Naive thymus-derived CD4-positive, alpha-beta T cell (primary cell): ENCODE measurements at regions of chr2 and their contacts with region 1.

Region 1: DNA sequence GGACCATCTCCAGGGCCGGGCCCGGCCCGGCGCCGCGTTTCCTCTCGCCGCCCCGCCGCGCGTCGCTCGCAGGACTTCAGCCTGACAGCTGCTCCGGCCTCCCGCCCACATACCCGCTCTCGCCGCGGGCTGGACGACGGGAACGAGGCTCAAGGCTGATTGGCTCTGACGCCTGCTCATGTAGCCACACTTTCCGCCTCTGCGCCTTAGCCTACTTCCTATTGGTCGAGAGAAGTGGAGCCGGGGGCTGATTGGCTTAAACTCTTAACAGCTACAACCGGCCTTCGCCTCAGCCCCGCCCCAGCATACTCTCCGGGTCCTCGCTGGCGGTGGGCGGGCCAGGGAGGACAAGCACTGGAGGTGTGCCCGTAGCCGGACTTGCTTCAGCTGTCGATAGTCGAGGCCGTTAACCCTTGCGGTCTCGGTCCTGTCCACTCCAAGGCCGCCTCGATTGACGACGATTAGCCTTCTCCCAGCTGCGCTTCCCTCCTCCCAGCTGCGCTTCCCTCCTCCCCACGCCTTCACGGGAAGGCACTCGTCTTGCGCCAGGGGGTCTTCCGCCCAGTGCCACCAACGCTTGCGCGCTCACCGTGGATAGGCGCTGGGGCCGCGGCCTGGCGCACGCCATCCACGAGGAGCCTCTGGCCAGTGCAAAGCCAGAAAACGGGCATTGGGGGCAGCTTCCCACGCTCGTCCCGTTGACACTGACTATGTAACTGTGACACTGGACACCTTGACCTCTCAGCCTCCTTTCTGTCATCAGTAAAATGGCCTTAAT is at the start of gene PRADC1:
- DNase-seq: peak; percentile 73 to 95 (median 91)
- ATAC-seq: peak; percentile 89
- H3K4me3 ChIP-seq: peak within 1 kb of the TSS; percentile 90
- H3K4me3 Mint-ChIP-seq: peak within 1 kb of the TSS; percentile 88 to 100 (median 98)
- H3K27ac ChIP-seq: peak within 1 kb of the TSS; percentile 94
- H3K27ac Mint-ChIP-seq: peak within 1 kb of the TSS; percentile 77 to 96 (median 94)
- H3K4me1 ChIP-seq: peaks cover 15% of the 10 kb centered on the region in 2 donors
- H3K4me1 Mint-ChIP-seq: peaks cover 25 to 41% (median 37%) of the 10 kb centered on the region in 7 donors
- H3K27me3 ChIP-seq: no peaks in the 10 kb centered on the region
- H3K27me3 Mint-ChIP-seq: peaks cover 0 to 2% (median 0%) of the 10 kb centered on the region in 5 donors
- total RNA-seq, gene PRADC1: 4.3 to 8.8 (median 6.9) TPM

Region 2: GRCh38 chr2:73071360-73072133 is 161.8 kb before region 1 on chr2 and contains the start of gene SFXN5:
- CTCF ChIA-PET with region 1: no interaction called
- POLR2A ChIA-PET with region 1: interaction called, 5 read pairs
- intact Hi-C with region 1: loop called (anchors 1 kb)
- DNase-seq: peak; percentile 85 to 98 (median 90)
- ATAC-seq: peak; percentile 93
- H3K4me3 ChIP-seq: peak within 1 kb of the TSS; percentile 98
- H3K4me3 Mint-ChIP-seq: peak within 1 kb of the TSS; percentile 82 to 98 (median 93)
- H3K27ac ChIP-seq: peak within 1 kb of the TSS; percentile 81
- H3K27ac Mint-ChIP-seq: peak within 1 kb of the TSS; percentile 86 to 96 (median 94)
- H3K4me1 ChIP-seq: peaks cover 5 to 7% of the 10 kb centered on the region in 2 donors
- H3K4me1 Mint-ChIP-seq: peaks cover 14 to 39% (median 26%) of the 10 kb centered on the region in 7 donors
- H3K27me3 ChIP-seq: no peaks in the 10 kb centered on the region
- H3K27me3 Mint-ChIP-seq: peaks cover 0 to 18% (median 0%) of the 10 kb centered on the region in 5 donors
- total RNA-seq, gene SFXN5: 8.8 to 17.4 (median 10.9) TPM

Region 3: GRCh38 chr2:73253901-73254300 is 20.6 kb after region 1 on chr2:
- CTCF ChIA-PET with region 1: interaction called, 4 read pairs
- POLR2A ChIA-PET with region 1: interaction called, 12 read pairs
- intact Hi-C with region 1: loop called in 1 of 2 experiments (anchors 2 kb)
- DNase-seq: no peak
- ATAC-seq: peak; percentile 25
- H3K4me3 ChIP-seq: no peak overlapping the region
- H3K4me3 Mint-ChIP-seq: no peak overlapping the region
- H3K27ac ChIP-seq: no peak overlapping the region
- H3K27ac Mint-ChIP-seq: peak overlapping the region in 2 of 9 donors; percentile 3 to 25
- H3K4me1 ChIP-seq: peaks cover 0 to 6% of the 10 kb centered on the region in 2 donors
- H3K4me1 Mint-ChIP-seq: peaks cover 0 to 16% (median 8%) of the 10 kb centered on the region in 7 donors
- H3K27me3 ChIP-seq: no peaks in the 10 kb centered on the region
- H3K27me3 Mint-ChIP-seq: no peaks in the 10 kb centered on the region

Region 4: GRCh38 chr2:73736855-73737779 is 503.8 kb after region 1 on chr2 and contains the start of gene TPRKB:
- CTCF ChIA-PET with region 1: no interaction called
- POLR2A ChIA-PET with region 1: interaction called, 8 read pairs
- intact Hi-C with region 1: loop called in 1 of 2 experiments (anchors 1 kb)
- DNase-seq: peak; percentile 73 to 95 (median 94)
- ATAC-seq: peak; percentile 99
- H3K4me3 ChIP-seq: peak within 1 kb of the TSS; percentile 78
- H3K4me3 Mint-ChIP-seq: peak within 1 kb of the TSS; percentile 92 to 98 (median 98)
- H3K27ac ChIP-seq: peak within 1 kb of the TSS; percentile 67
- H3K27ac Mint-ChIP-seq: peak within 1 kb of the TSS; percentile 85 to 97 (median 91)
- H3K4me1 ChIP-seq: peaks cover 8 to 14% of the 10 kb centered on the region in 2 donors
- H3K4me1 Mint-ChIP-seq: peaks cover 10 to 31% (median 21%) of the 10 kb centered on the region in 7 donors
- H3K27me3 ChIP-seq: no peaks in the 10 kb centered on the region
- H3K27me3 Mint-ChIP-seq: peaks cover 0 to 2% (median 0%) of the 10 kb centered on the region in 5 donors
- total RNA-seq, gene TPRKB: 16.5 to 34.6 (median 27.5) TPM

Region 5: GRCh38 chr2:74391580-74392448 is 1158.5 kb after region 1 on chr2:
- CTCF ChIA-PET with region 1: no interaction called
- POLR2A ChIA-PET with region 1: no interaction called
- intact Hi-C with region 1: loop called in 1 of 2 experiments (anchors 10 kb)
- DNase-seq: peak; percentile 89 to 99 (median 93)
- ATAC-seq: peak; percentile 97
- H3K4me3 ChIP-seq: peak overlapping the region; percentile 78
- H3K4me3 Mint-ChIP-seq: peak overlapping the region in 4 of 10 donors; percentile 40 to 100 (median 92)
- H3K27ac ChIP-seq: peak overlapping the region; percentile 91
- H3K27ac Mint-ChIP-seq: peak overlapping the region in 8 of 9 donors; percentile 98 to 100 (median 99)
- H3K4me1 ChIP-seq: peaks cover 8 to 25% of the 10 kb centered on the region in 2 donors
- H3K4me1 Mint-ChIP-seq: peaks cover 0 to 15% (median 5%) of the 10 kb centered on the region in 7 donors
- H3K27me3 ChIP-seq: no peaks in the 10 kb centered on the region
- H3K27me3 Mint-ChIP-seq: peaks cover 0 to 14% (median 5%) of the 10 kb centered on the region in 5 donors

Region 6: DNA sequence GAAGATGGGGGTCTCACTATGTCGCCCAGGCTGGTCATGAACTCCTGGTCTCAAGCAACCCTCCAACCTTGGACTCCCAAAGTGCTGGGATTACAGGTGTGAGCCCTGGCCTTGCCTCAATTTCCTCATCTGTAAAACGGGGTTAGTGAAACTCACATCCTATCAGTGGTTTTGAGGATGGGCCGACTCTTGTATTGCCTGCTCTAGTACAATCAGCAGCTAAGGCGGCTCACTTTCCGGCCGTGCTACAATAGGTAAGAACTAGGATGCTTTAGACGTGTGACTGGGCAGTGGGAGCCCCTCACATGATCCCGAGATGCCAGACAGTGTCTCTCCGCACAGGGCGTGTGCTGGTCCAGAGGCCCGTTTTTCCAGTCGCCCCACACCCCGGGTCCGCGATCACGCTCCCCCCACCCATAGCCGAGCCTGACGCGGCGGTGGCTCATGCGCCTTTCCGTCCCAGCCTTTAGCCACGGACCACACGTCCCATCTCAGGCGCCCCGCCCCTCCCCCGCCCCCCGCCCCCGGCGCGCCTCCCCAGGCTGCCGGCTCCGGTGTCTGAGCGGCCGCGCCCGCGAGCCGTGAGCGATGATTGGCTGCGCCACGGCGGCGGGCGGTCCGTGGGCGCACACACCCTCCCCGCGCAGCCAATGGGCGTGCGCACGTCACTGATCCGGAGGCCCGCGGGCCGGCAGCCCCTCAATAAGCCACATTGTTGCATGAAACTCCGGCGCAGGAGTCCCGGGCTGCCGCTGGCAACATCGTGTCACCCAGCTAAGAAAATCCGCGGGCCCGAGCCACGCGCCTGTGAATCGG is 1600.3 kb after region 1 on chr2 and contains the start of gene HK2:
- CTCF ChIA-PET with region 1: no interaction called
- POLR2A ChIA-PET with region 1: no interaction called
- intact Hi-C with region 1: loop called in 1 of 2 experiments (anchors 10 kb)
- DNase-seq: peak; percentile 68 to 87 (median 78)
- ATAC-seq: peak; percentile 91
- H3K4me3 ChIP-seq: peak within 1 kb of the TSS; percentile 72
- H3K4me3 Mint-ChIP-seq: peak within 1 kb of the TSS; percentile 89 to 97 (median 94)
- H3K27ac ChIP-seq: peak within 1 kb of the TSS; percentile 67
- H3K27ac Mint-ChIP-seq: peak within 1 kb of the TSS; percentile 35 to 95 (median 91)
- H3K4me1 ChIP-seq: peaks cover 14 to 32% of the 10 kb centered on the region in 2 donors
- H3K4me1 Mint-ChIP-seq: peaks cover 28 to 49% (median 33%) of the 10 kb centered on the region in 7 donors
- H3K27me3 ChIP-seq: no peaks in the 10 kb centered on the region
- H3K27me3 Mint-ChIP-seq: peaks cover 0 to 7% (median 0%) of the 10 kb centered on the region in 5 donors
- total RNA-seq, gene HK2: 11.1 to 74.6 (median 17.7) TPM